ENCODE measurements at regions of chr20 and their contacts with region 1.

Region 1: DNA sequence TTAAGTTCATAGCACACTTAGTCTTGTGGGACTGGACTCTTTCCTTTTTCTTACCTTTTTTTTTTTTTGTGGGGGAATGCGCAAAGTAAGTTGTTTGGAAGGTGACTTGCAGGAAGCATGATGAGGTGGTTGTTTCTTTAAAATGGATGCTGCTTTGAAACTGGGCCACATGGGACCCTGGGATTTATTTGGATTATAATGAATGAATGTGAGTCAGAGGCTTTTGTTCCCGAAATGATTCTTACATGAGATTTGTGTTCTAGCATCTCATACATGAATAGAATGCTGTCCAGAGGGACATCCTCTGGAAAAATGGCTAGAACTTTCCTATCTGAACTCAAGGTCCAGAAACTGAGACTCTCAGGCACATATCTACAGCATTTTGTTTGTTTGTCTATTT is 236.6 kb upstream of the RNF24 start:
- DNase-seq: no peak
- H3K4me3 ChIP-seq: no peak overlapping the region
- H3K27ac ChIP-seq: no peak overlapping the region
- H3K4me1 ChIP-seq: no peaks in the 10 kb centered on the region
- H3K27me3 ChIP-seq: peaks cover 26% of the 10 kb centered on the region
- CTCF ChIP-seq: no peak

Region 2: GRCh38 chr20:4592316-4593148 is 340.5 kb after region 1 on chr20:
- intact Hi-C with region 1: loop called (anchors 5 kb)
- DNase-seq: peak; percentile 31
- H3K4me3 ChIP-seq: peak overlapping the region; percentile 32
- H3K27ac ChIP-seq: no peak overlapping the region
- H3K4me1 ChIP-seq: peaks cover 8% of the 10 kb centered on the region
- H3K27me3 ChIP-seq: no peaks in the 10 kb centered on the region
- CTCF ChIP-seq: peak; percentile 94

Region 3: DNA sequence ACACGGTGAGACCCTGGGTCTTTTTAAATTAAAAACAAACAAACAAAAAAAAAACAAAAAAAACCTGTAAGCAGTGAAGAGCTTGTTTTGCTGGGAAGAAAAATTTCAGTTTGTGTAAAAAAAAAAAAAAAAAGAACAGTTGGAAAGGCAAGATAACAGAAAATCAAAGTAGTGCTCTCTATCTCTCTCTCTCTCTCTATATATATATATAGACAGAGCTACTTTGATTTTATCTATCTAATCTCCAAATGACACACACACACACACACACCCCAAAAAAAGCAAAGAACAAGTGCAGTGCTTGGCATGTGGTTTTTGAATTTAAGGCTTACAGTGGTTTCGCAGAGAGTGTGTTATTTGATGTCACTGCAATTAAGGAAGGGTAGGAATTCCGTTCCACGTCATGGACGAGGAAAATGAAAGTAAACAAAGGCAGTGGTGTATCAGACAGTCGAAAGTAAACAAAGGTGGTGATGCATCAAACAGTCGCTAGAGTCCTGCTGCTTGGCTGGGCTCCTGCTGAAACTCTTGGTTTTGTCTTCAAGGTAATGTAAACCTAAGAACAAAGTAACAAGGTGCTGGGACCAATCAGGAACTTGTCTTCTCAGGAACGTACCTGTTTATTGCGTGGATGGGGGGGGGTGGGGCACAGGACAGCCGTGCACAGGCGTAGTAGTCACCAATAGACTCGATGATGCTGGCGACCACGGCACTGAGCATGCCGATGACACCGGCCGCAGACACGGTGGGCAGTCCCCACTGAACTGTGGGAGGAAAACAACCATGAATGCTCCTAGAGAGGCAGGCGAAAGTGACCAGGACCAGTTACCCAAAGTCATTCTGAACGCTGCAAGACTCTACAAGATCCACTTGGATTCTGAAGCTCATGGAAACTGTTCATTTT is 617.5 kb after region 1 on chr20:
- intact Hi-C with region 1: no loop called
- DNase-seq: peak; percentile 48
- H3K4me3 ChIP-seq: no peak overlapping the region
- H3K27ac ChIP-seq: no peak overlapping the region
- H3K4me1 ChIP-seq: no peaks in the 10 kb centered on the region
- H3K27me3 ChIP-seq: no peaks in the 10 kb centered on the region
- CTCF ChIP-seq: no peak

Measured in colonic mucosa (tissue), 4 donors.